Esophagus muscularis mucosa (tissue), 4 donors: ENCODE measurements at regions of chr1 and their contacts with region 1.

Region 1: GRCh38 chr1:226121587-226122400 is 59.3 kb downstream of the H3-3A start:
- DNase-seq: no peak
- H3K4me3 ChIP-seq: peak overlapping the region; percentile 68 to 82 (median 74)
- H3K27ac ChIP-seq: peak overlapping the region; percentile 60 to 82 (median 76)
- H3K4me1 ChIP-seq: peaks cover 0 to 31% (median 20%) of the 10 kb centered on the region in 4 donors
- H3K27me3 ChIP-seq: no peaks in the 10 kb centered on the region
- CTCF ChIP-seq: peak; percentile 87 to 98 (median 93)
- EP300 ChIP-seq: no peak
- POLR2A ChIP-seq: no peak

Region 2: DNA sequence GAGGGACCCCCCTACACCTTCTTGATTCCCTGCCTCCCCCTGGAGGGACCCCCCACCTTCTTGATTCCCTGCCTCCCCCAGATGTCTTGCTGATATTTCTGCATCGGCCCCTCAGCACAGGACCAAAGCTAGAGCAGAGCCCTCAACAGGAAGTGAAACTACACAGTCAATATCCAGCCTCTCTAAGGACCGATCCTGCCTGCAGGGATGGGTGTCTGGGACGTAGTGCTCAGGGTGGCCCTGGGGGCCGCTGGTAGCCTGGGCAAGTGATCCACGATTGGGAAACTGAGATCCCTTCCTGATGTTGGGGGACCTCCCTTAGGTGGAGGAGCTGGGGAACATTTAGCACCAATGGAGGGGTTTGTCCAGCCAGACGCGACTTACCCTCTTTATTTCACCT is 176.8 kb before region 1 on chr1:
- intact Hi-C with region 1: no loop called
- DNase-seq: no peak
- H3K4me3 ChIP-seq: no peak overlapping the region
- H3K27ac ChIP-seq: no peak overlapping the region
- H3K4me1 ChIP-seq: peaks cover 15 to 22% (median 20%) of the 10 kb centered on the region in 4 donors
- H3K27me3 ChIP-seq: peaks cover 0 to 8% (median 0%) of the 10 kb centered on the region in 4 donors
- CTCF ChIP-seq: no peak
- EP300 ChIP-seq: no peak
- POLR2A ChIP-seq: no peak

Region 3: DNA sequence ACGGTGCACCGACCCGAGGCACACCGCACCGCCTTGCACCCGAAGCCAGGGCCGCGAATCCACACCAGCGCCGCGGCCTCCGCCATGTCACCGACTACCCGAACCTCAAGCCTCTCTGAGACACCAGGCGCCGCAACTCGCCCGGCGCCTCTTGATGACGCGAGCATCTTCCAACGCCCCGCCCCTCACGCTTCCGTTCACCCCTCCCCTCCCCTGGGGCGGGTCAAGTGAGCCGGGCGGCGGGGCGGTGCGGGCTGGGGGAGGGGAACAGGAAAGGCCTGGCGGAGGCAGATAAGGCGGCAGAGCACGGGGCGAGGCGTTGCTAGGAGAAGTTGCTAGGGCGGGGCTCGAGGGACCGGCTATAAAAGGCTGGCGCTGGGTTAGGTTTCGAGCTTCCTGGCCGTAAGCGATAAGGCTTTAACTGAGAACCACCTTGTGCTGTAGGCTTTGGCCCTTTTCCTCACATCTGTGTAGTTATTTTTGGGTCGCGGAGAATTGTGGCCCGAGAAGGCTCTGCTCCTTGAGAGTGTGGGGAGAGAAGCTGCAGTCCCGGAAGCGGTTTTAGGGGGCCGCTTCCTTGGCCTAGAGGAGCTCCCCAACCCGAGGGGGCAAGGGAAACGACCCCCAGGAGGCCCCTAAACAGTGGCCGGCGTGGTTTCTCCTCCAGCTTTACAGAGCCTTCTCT is 122.4 kb before region 1 on chr1 and contains the start of gene SDE2:
- intact Hi-C with region 1: loop called (anchors 5 kb)
- DNase-seq: peak; percentile 100
- H3K4me3 ChIP-seq: peak within 1 kb of the TSS; percentile 69 to 82 (median 74)
- H3K27ac ChIP-seq: peak within 1 kb of the TSS; percentile 92 to 97 (median 95)
- H3K4me1 ChIP-seq: peaks cover 37 to 48% (median 46%) of the 10 kb centered on the region in 4 donors
- H3K27me3 ChIP-seq: no peaks in the 10 kb centered on the region
- CTCF ChIP-seq: peak in 1 of 3 experiments; percentile 17
- EP300 ChIP-seq: no peak
- POLR2A ChIP-seq: peak; percentile 73
- total RNA-seq, gene SDE2: 15.0 to 22.5 (median 19.1) TPM

Region 4: GRCh38 chr1:226062558-226063223 is 59.1 kb before region 1 on chr1 and contains the start of gene H3-3A:
- intact Hi-C with region 1: loop called (anchors 1 kb)
- DNase-seq: peak; percentile 100
- H3K4me3 ChIP-seq: peak within 1 kb of the TSS; percentile 84 to 91 (median 88)
- H3K27ac ChIP-seq: peak within 1 kb of the TSS; percentile 98 to 100 (median 99)
- H3K4me1 ChIP-seq: peaks cover 32 to 54% (median 49%) of the 10 kb centered on the region in 4 donors
- H3K27me3 ChIP-seq: no peaks in the 10 kb centered on the region
- CTCF ChIP-seq: peak in 2 of 3 experiments; percentile 13 to 17
- EP300 ChIP-seq: no peak
- POLR2A ChIP-seq: peak; percentile 88
- total RNA-seq, gene H3-3A: 319 to 384 (median 350) TPM

Region 5: GRCh38 chr1:226083302-226084101 is 38.3 kb before region 1 on chr1:
- intact Hi-C with region 1: loop called (anchors 5 kb)
- DNase-seq: peak; percentile 97
- H3K4me3 ChIP-seq: peak overlapping the region; percentile 65 to 82 (median 73)
- H3K27ac ChIP-seq: peak overlapping the region; percentile 77 to 86 (median 84)
- H3K4me1 ChIP-seq: peaks cover 12 to 16% (median 15%) of the 10 kb centered on the region in 4 donors
- H3K27me3 ChIP-seq: no peaks in the 10 kb centered on the region
- CTCF ChIP-seq: peak in 1 of 3 experiments; percentile 7
- EP300 ChIP-seq: no peak
- POLR2A ChIP-seq: no peak

Region 6: GRCh38 chr1:226186124-226187018 is 64.6 kb after region 1 on chr1 and contains the start of gene ACBD3:
- intact Hi-C with region 1: loop called (anchors 2 kb)
- DNase-seq: peak; percentile 95
- H3K4me3 ChIP-seq: peak within 1 kb of the TSS; percentile 82 to 96 (median 90)
- H3K27ac ChIP-seq: peak within 1 kb of the TSS; percentile 88 to 96 (median 94)
- H3K4me1 ChIP-seq: peaks cover 42 to 53% (median 47%) of the 10 kb centered on the region in 4 donors
- H3K27me3 ChIP-seq: no peaks in the 10 kb centered on the region
- CTCF ChIP-seq: peak in 1 of 3 experiments; percentile 33
- EP300 ChIP-seq: no peak
- POLR2A ChIP-seq: peak; percentile 79
- total RNA-seq, gene ACBD3: 28.1 to 53.6 (median 32.6) TPM

Region 7: GRCh38 chr1:226201029-226201593 is 79.3 kb after region 1 on chr1:
- intact Hi-C with region 1: loop called (anchors 2 kb)
- DNase-seq: no peak
- H3K4me3 ChIP-seq: no peak overlapping the region
- H3K27ac ChIP-seq: no peak overlapping the region
- H3K4me1 ChIP-seq: no peaks in the 10 kb centered on the region
- H3K27me3 ChIP-seq: no peaks in the 10 kb centered on the region
- CTCF ChIP-seq: no peak
- EP300 ChIP-seq: no peak
- POLR2A ChIP-seq: no peak

Region 8: DNA sequence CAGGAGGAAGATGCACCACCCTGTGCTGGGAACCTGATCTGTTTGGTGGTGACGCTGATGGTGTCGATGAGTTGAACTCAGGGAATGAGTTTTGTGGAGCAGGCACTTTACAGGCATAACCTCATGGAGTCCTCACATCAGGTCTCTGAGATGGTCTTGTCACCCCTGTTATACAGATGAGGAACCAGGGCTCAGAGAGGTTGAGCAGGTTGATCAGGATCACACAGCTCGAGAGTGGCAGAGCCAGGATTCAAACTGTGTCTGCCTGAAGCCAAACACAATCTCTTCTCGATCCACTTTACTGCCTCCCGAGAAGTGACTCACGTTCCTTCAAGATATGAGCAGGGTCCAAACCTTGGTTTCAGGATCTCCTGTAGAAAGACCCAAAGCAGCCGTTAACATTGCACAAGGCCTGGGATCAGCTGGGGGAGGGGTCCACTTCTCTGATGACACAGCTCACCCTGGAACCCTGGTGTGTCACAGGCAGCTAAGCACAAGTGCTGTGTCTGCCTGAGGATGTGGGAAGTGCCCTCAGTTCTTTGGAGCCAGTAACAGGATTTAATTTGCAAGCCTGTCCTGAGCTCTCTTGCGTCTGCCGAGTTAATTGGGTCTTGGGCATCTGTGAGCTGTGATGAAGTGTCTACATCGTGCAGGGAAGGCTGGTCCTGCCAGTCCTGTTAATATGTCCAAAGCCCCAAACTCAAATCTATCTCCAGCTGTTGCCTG is 361.3 kb after region 1 on chr1:
- intact Hi-C with region 1: no loop called
- DNase-seq: no peak
- H3K4me3 ChIP-seq: no peak overlapping the region
- H3K27ac ChIP-seq: no peak overlapping the region
- H3K4me1 ChIP-seq: no peaks in the 10 kb centered on the region
- H3K27me3 ChIP-seq: peaks cover 0 to 31% (median 0%) of the 10 kb centered on the region in 4 donors
- CTCF ChIP-seq: no peak
- EP300 ChIP-seq: no peak
- POLR2A ChIP-seq: no peak